Activated CD4-positive, alpha-beta T cell treated with anti-CD3 and anti-CD28 coated beads, Interleukin-2, amount 10 ng/mL, durations not matched to agents 24 days and 14 days (primary cell): ENCODE measurements at regions of chr16 and their contacts with region 1.

Region 1: DNA sequence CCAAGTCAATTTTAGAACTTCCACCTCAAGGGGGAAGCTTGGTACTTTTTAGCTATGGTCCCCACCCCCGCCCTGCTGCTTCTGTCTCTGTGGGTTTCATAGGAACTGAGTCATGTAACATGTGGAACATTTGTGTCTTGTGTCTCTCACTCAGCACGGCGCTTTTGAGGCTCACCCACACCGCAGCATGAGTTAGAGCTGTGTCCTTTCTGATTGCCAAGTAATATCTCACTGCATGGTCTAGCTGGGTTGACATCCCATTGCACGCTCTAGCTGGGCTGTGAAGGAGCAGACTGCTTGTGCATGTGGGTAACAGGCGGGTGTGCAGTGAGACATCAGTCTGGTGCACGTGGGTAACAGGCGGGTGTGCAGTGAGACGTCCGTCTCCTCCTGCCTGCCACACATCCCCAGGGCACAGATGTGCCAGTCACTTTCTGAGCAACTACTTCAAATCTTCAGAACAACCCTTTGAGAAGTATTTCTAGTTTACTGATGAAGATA is 26.4 kb upstream of the SLC7A5 start:
- DNase-seq: peak; percentile 94
- H3K4me3 Mint-ChIP-seq: peak overlapping the region; percentile 72
- H3K27ac Mint-ChIP-seq: peak overlapping the region; percentile 100
- H3K4me1 Mint-ChIP-seq: peaks cover 42% of the 10 kb centered on the region
- H3K27me3 Mint-ChIP-seq: no peaks in the 10 kb centered on the region

Region 2: GRCh38 chr16:87850009-87851006 is 45.4 kb before region 1 on chr16:
- intact Hi-C with region 1: no loop called
- DNase-seq: peak; percentile 94
- H3K4me3 Mint-ChIP-seq: no peak overlapping the region
- H3K27ac Mint-ChIP-seq: peak overlapping the region; percentile 62
- H3K4me1 Mint-ChIP-seq: peaks cover 31% of the 10 kb centered on the region
- H3K27me3 Mint-ChIP-seq: no peaks in the 10 kb centered on the region

Region 3: DNA sequence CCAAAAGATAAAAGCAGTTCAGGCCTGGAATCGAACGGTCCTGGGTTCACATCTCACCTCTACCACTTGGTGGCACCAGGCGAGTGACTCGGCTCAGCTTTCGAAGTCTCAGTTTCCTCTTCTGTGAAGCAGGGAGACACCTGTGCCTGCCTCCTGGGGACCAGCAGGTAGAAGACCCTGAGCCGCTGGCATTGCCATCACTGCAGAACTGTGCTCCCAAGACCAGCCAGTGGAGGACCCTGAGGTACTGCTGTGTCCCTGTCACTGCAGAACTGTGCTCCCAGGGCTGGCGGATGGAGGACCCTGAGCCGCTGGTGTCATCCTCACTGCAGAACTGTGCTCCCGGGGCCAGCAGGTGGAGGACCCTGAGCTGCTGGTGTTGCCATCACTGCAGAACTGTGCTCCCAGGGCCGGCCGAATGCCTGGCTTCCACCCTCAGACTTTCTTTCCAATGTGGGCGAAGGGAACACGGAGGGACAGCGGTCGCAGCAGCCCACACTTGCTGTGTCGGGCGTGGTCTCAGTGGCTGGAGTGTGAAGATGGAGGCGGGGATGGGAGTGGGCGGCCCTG is 17.7 kb before region 1 on chr16:
- intact Hi-C with region 1: loop called (anchors 1 kb)
- DNase-seq: peak; percentile 80
- H3K4me3 Mint-ChIP-seq: peak overlapping the region; percentile 32
- H3K27ac Mint-ChIP-seq: peak overlapping the region; percentile 73
- H3K4me1 Mint-ChIP-seq: peaks cover 46% of the 10 kb centered on the region
- H3K27me3 Mint-ChIP-seq: no peaks in the 10 kb centered on the region